ENCODE measurements at regions of chr12 and their contacts with region 1.

Region 1: DNA sequence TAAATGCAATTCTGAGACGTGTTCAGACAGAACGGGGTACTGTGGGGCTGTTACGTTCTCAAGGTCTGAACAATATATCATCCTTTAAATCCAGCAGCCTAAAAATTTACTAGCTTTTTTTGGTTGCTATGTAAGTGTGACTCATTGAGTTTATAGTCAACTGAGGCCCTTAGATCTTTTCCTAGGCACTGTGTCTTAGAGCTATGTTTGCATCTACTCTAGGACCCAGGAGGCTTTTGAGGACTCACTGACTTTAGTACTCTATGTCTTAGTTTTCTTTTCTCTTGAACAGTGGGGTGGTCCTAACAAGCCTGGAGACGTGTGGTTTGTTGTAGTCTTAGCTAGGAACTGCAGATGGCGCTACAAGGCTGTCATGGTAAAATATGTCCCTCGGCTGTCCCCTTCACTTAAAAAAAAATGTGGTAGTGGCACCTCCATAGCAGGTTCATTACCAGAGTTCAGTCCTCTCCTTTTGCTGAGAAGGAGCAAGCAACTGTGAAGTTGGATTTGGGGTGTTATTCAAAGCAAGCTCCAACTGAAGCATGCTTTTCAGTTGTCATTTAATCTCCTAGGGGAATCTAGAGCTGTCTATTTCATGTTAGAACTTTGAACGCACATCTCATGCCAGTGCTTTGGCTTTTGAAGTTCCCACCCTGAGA is 8.7 kb upstream of the SPATS2 start:
- DNase-seq: peak; percentile 79
- ATAC-seq: peak; percentile 90
- H3K4me3 Mint-ChIP-seq: no peak overlapping the region
- H3K27ac Mint-ChIP-seq: no peak overlapping the region
- H3K4me1 Mint-ChIP-seq: peaks cover 8% of the 10 kb centered on the region
- H3K27me3 Mint-ChIP-seq: peaks cover 37% of the 10 kb centered on the region

Region 2: GRCh38 chr12:49219417-49220026 is 139.1 kb before region 1 on chr12:
- CTCF ChIA-PET with region 1: no interaction called
- POLR2A ChIA-PET with region 1: no interaction called
- DNase-seq: no peak
- ATAC-seq: no peak
- H3K4me3 Mint-ChIP-seq: no peak overlapping the region
- H3K27ac Mint-ChIP-seq: no peak overlapping the region
- H3K4me1 Mint-ChIP-seq: no peaks in the 10 kb centered on the region
- H3K27me3 Mint-ChIP-seq: peaks cover 8% of the 10 kb centered on the region

Region 3: GRCh38 chr12:49296034-49296835 is 62.4 kb before region 1 on chr12:
- CTCF ChIA-PET with region 1: interaction called, 111 read pairs
- POLR2A ChIA-PET with region 1: no interaction called
- DNase-seq: peak; percentile 76
- ATAC-seq: peak; percentile 73
- H3K4me3 Mint-ChIP-seq: peak overlapping the region; percentile 63
- H3K27ac Mint-ChIP-seq: no peak overlapping the region
- H3K4me1 Mint-ChIP-seq: peaks cover 22% of the 10 kb centered on the region
- H3K27me3 Mint-ChIP-seq: peaks cover 51% of the 10 kb centered on the region

Region 4: DNA sequence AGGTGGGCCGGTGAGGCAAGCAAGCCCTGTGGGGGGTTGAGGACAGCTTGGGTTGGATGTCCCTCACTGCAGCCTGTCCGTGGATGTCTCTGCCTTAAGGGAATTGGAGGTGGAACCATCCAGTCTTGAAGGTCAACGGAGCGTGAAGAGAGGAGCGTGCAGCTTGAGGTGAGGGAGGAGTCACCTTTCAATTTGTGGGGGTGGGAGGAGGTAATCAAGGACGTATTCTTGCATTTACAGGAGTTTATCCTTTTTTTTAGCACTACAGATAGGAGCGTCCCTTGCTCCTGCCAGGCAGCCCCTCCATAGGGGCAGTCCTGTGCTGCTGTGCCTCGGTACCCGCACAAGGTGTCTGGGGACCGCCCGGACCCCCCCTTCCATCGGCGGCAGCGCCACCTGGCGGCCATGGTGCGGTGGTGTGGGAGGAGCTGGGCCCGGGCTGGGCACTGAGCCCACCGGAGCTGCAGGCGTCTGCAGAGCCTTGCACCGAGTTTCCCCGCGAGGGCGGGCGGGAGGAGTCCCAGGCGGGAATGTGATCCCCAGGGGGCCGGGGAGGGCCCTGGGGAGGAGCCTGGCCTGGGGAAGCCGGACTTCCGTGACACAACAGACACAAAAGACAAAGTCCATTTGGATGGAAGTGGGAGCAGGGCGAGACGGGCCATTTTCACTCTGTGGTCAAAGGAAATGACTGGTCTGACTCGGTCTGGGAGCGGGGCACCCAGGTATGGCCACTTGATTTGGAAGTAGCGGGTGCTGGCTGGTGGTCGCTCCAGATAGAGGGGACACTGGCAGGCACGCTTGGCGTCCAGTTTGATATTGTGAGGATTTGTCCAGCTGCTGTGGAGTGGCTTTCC is 11.0 kb before region 1 on chr12:
- CTCF ChIA-PET with region 1: interaction called, 89 read pairs
- POLR2A ChIA-PET with region 1: no interaction called
- DNase-seq: peak; percentile 81
- ATAC-seq: peak; percentile 87
- H3K4me3 Mint-ChIP-seq: peak overlapping the region; percentile 60
- H3K27ac Mint-ChIP-seq: no peak overlapping the region
- H3K4me1 Mint-ChIP-seq: peaks cover 36% of the 10 kb centered on the region
- H3K27me3 Mint-ChIP-seq: peaks cover 71% of the 10 kb centered on the region

Region 5: DNA sequence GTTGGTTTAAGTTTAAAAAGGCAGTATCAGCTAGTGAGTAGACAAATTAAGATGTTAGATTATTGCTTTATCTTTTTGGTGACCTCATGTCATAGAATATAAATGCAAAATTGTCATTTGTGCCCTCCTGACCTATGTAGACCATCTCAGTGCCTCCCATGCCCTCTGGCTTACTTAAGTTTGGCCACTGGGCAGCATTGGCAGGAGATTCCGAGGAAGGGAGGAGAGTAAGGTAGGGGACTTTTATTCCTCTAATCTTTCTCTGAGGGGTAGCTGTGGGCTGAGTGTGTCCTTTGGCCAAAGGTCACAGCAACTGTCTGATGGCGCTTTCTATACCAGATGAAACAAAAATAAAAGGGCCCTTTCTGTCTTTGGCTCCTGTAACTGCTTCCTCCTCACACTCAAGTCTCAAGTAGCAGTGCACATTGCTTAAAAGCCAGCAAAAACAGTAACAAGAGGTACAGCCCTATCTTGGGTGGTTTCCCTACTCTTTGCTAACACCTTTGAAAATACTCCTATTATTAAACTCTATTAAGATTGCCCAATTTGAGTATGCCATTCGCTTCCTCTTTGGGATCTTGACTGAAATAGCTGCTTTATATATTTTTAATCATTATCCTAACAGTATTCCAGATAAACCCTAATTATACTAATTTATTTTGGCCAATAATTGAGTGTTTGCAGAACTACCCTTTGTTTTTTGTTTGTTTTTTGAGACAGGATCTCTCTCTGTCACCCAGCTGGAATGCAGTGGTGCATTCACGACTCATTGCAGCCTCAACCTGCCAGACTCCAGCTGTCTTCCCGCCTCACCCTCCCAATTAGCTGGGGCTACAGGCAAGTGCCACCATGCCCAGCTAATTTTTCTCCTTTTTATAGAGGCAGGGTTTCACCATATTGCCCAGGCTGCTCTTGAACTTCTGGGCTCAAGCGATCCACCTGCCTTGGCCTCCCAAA is 123.8 kb after region 1 on chr12:
- CTCF ChIA-PET with region 1: interaction called, 11 read pairs
- POLR2A ChIA-PET with region 1: no interaction called
- DNase-seq: no peak
- ATAC-seq: no peak
- H3K4me3 Mint-ChIP-seq: no peak overlapping the region
- H3K27ac Mint-ChIP-seq: no peak overlapping the region
- H3K4me1 Mint-ChIP-seq: peaks cover 12% of the 10 kb centered on the region
- H3K27me3 Mint-ChIP-seq: no peaks in the 10 kb centered on the region

Region 6: DNA sequence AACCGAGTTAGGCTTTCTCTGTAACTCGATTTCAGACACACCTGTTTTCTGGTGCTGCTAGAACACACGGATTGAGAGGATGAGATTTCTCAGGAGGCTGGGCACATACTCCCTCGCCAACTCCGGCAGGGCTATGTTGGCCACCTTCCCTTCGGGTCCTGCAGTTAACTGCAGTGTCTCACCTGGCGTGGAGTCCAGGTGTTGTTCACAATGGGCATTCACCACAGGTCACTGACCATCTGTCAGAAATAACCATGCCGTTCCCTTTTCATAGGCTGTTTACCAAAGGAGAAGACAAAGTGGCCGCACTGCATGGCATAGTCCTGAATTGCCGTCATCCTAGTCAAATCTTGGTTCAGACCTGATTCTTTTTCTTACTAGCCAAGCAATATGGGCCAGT is 174.7 kb after region 1 on chr12:
- CTCF ChIA-PET with region 1: interaction called, 45 read pairs
- POLR2A ChIA-PET with region 1: no interaction called
- DNase-seq: no peak
- ATAC-seq: no peak
- H3K4me3 Mint-ChIP-seq: no peak overlapping the region
- H3K27ac Mint-ChIP-seq: no peak overlapping the region
- H3K4me1 Mint-ChIP-seq: peaks cover 8% of the 10 kb centered on the region
- H3K27me3 Mint-ChIP-seq: peaks cover 31% of the 10 kb centered on the region

Region 7: GRCh38 chr12:49623142-49623904 is 264.7 kb after region 1 on chr12 and contains the start of gene PRPF40B:
- CTCF ChIA-PET with region 1: interaction called, 26 read pairs
- POLR2A ChIA-PET with region 1: no interaction called
- DNase-seq: peak; percentile 87
- ATAC-seq: peak; percentile 88
- H3K4me3 Mint-ChIP-seq: peak within 1 kb of the TSS; percentile 82
- H3K27ac Mint-ChIP-seq: peak within 1 kb of the TSS; percentile 89
- H3K4me1 Mint-ChIP-seq: peaks cover 29% of the 10 kb centered on the region
- H3K27me3 Mint-ChIP-seq: peaks cover 16% of the 10 kb centered on the region
- total RNA-seq, gene PRPF40B: 14.4 to 14.6 TPM

Measured in activated CD8-positive, alpha-beta T cell treated with anti-CD3 and anti-CD28 coated beads, Interleukin-2, amount 10 ng/mL, durations not matched to agents 7 days and 5 days (primary cell).